ENCODE measurements at regions of chr20 and their contacts with region 1.

Region 1: GRCh38 chr20:45368221-45368980 is 5.4 kb downstream of the SYS1 start:
- DNase-seq: peak; percentile 51 to 64 (median 54)
- H3K4me3 ChIP-seq: peak overlapping the region in 1 of 2 donors; percentile 6
- H3K4me3 Mint-ChIP-seq: peak overlapping the region; percentile 14 to 76 (median 64)
- H3K27ac ChIP-seq: peak overlapping the region; percentile 36
- H3K27ac Mint-ChIP-seq: peak overlapping the region; percentile 80 to 94 (median 87)
- H3K4me1 ChIP-seq: peaks cover 61% of the 10 kb centered on the region
- H3K4me1 Mint-ChIP-seq: peaks cover 37 to 80% (median 68%) of the 10 kb centered on the region in 4 donors
- H3K27me3 ChIP-seq: no peaks in the 10 kb centered on the region
- H3K27me3 Mint-ChIP-seq: no peaks in the 10 kb centered on the region

Region 2: DNA sequence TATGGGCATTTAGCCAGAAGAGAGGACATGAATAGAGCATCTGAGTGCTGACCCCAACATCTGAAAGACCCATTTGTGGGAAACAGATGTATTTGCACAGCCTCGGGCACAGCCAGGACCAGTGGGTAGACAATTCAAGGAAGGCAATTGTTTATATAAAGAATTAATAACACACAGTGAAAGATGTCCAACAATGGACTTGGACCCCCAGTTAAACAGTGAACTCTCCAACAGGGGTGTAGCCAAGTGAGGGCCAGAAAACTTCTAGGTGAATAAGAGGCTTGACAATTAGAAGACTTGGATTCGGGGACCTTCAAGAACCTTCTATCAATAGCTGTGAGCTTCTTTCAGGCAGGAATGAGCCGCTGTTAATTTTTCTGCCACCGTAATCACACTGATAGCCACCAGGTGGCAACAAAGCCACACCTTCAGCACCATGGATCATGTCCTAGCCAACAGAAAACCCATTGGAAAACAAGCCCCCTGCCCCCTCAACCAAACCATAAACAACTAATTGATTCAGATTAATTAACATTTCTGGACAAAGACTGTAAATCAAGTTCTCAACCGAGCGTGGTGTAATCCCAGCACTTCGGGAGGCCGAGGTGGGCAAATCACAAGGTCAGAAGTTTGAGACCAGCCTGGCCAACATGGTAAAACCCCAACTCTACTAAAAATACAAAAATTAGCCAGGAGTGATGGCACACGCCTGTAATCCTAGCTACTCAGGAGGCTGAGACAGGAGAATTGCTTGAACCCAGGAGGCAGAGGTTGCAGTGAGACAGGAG is 1919.5 kb before region 1 on chr20:
- CTCF ChIA-PET with region 1: no interaction called
- POLR2A ChIA-PET with region 1: no interaction called
- intact Hi-C with region 1: no loop called
- DNase-seq: peak in 4 of 5 donors; percentile 28 to 41 (median 34)
- H3K4me3 ChIP-seq: no peak overlapping the region
- H3K4me3 Mint-ChIP-seq: no peak overlapping the region
- H3K27ac ChIP-seq: no peak overlapping the region
- H3K27ac Mint-ChIP-seq: no peak overlapping the region
- H3K4me1 ChIP-seq: no peaks in the 10 kb centered on the region
- H3K4me1 Mint-ChIP-seq: peaks cover 0 to 6% (median 5%) of the 10 kb centered on the region in 4 donors
- H3K27me3 ChIP-seq: no peaks in the 10 kb centered on the region
- H3K27me3 Mint-ChIP-seq: peaks cover 11 to 33% of the 10 kb centered on the region in 2 donors

Region 3: DNA sequence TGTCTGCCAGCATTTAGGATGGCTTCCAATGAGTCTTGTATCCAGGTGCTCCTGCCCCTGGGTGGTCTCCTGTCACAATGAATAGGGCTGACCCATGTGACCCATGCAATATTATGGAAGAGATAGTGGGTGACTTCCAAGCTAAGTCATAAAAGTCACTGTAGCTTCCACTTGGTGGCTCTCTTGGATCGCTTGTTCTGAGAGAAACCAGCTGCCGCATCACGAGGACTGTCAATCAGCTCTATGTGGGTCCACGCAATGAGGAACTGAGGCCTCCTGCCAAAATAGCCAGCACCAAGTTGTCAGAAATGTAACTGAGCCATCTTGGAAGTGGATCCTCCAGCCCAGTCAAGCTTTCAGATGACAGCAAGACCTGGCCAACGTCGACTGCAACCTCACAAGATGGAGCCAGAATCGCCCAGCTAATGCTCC is 45.4 kb before region 1 on chr20:
- CTCF ChIA-PET with region 1: interaction called, 78 read pairs
- POLR2A ChIA-PET with region 1: interaction called, 16 read pairs
- intact Hi-C with region 1: loop called (anchors 1 kb)
- DNase-seq: no peak
- H3K4me3 ChIP-seq: no peak overlapping the region
- H3K4me3 Mint-ChIP-seq: no peak overlapping the region
- H3K27ac ChIP-seq: no peak overlapping the region
- H3K27ac Mint-ChIP-seq: no peak overlapping the region
- H3K4me1 ChIP-seq: peaks cover 29% of the 10 kb centered on the region
- H3K4me1 Mint-ChIP-seq: peaks cover 13 to 32% (median 22%) of the 10 kb centered on the region in 4 donors
- H3K27me3 ChIP-seq: no peaks in the 10 kb centered on the region
- H3K27me3 Mint-ChIP-seq: no peaks in the 10 kb centered on the region